Activated T-helper 1 cell treated with anti-CD3 and anti-CD28 coated beads, Interleukin-12 subunit alpha, Interleukin-12 subunit beta, Interleukin-2, Interleukin-4 antibody, amounts not matched to agents 30 ng/mL and 10 ng/mL and 1 ng/mL, durations not matched to agents 14 hours and 24 hours and 36 hours (primary cell): ENCODE measurements at regions of chr7 and their contacts with region 1.

Region 1: GRCh38 chr7:44847508-44847920 is 373 bp downstream of the H2AZ2 start:
- DNase-seq: peak; percentile 81
- H3K4me3 Mint-ChIP-seq: peak overlapping the region; percentile 90
- H3K27ac Mint-ChIP-seq: peak overlapping the region; percentile 98
- H3K4me1 Mint-ChIP-seq: peaks cover 54% of the 10 kb centered on the region
- H3K27me3 Mint-ChIP-seq: no peaks in the 10 kb centered on the region

Region 2: GRCh38 chr7:44490351-44491200 is 356.9 kb before region 1 on chr7 and contains the start of gene NUDCD3:
- intact Hi-C with region 1: loop called (anchors 5 kb)
- DNase-seq: peak; percentile 73
- H3K4me3 Mint-ChIP-seq: peak within 1 kb of the TSS; percentile 88
- H3K27ac Mint-ChIP-seq: peak within 1 kb of the TSS; percentile 93
- H3K4me1 Mint-ChIP-seq: peaks cover 44% of the 10 kb centered on the region
- H3K27me3 Mint-ChIP-seq: no peaks in the 10 kb centered on the region
- total RNA-seq, gene NUDCD3: 77.9 and 83.1 TPM in 2 replicates

Region 3: DNA sequence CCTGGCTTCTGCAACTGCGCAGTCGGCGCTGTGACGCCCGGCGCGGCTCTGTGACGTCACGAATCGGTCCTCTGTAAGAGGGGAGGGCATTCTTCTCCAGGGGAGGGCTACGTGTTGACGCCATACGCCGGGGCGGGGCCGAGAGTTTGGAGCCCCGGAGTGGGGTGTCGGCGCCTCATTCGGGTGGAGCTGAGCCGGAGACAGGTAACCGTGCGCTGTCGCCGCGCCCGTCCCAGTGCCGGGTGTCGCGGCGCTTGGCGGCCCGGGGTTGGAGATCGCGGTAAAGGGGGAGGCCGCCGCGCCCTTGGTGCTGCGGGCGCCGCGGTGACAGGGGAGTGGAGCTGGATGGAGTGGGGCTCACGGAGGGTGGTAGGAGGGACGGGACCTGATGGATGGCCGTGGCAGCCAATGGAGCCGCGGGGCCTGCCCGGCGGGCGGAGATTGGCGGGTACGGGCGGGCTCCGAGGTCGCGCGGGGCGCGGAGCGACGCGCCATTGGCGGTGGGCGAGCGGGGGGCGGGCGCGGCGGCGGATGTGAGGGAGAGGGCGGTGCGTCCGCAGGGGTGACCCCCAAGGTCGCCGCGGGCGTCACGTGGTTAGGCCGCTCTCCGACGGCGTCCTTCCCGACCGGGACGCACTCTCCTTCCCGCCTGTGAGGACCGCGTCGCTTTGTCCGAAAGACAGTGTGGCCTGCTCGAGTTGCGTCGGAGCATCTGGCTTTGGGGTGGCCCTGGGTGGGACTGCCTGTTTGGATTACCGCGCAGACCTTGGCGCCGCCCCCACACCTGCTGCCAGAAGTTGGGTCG is 240.9 kb before region 1 on chr7 and contains the start of gene OGDH:
- intact Hi-C with region 1: loop called (anchors 1 kb)
- DNase-seq: peak; percentile 98
- H3K4me3 Mint-ChIP-seq: peak within 1 kb of the TSS; percentile 98
- H3K27ac Mint-ChIP-seq: peak within 1 kb of the TSS; percentile 99
- H3K4me1 Mint-ChIP-seq: peaks cover 39% of the 10 kb centered on the region
- H3K27me3 Mint-ChIP-seq: peaks cover 10% of the 10 kb centered on the region
- total RNA-seq, gene OGDH: 101 and 105 TPM in 2 replicates

Region 4: DNA sequence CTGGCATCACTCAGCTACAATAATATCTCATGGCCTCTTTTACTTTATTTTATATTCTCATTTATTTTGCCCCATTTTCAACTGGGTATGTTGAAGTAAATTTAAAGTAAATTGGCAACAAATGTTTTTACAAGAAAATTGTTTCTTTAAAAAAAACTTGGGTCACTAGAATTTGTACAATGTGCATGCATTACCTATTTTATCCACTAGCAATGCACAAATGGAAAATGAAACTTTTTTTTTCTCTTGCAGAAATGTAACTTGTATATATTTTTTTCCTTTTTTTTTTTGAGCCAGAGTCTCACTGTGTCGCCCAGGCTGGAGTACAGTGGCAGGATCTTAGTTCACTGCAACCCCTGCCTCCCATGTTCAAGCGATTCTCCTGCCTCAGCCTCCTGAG is 10.6 kb after region 1 on chr7:
- intact Hi-C with region 1: loop called (anchors 1 kb)
- DNase-seq: no peak
- H3K4me3 Mint-ChIP-seq: no peak overlapping the region
- H3K27ac Mint-ChIP-seq: no peak overlapping the region
- H3K4me1 Mint-ChIP-seq: peaks cover 17% of the 10 kb centered on the region
- H3K27me3 Mint-ChIP-seq: peaks cover 2% of the 10 kb centered on the region

Region 5: DNA sequence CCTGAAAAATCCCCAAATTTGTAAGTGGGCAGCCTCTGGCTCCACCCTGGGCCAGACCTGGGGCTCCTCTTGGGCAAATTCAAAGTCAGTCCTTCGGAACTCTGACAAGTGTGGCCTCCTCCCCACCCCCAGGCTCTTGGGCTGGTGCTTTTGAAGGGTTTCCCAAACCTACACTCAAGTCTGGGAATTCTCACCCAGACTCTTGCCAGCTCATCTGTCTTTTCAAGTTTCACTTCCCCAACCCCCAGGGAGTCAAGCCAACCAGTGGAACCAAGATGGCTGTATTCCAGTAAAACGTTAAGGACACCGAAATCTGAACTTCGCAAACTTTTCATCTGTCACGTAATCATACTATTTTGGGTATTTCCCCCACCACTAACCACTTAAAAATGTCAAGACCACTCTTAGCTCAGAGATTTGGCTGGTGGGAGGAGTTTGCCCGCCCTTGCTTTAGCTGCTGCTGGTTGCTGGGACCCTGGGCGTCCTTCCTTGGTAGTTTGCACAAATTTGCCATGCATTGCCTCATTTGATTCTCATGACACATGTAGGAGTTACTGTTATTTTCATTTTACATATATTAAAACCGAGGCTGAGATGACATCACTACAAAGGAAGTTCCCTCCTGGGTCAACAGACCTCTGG is 133.0 kb after region 1 on chr7:
- intact Hi-C with region 1: loop called (anchors 1 kb)
- DNase-seq: peak; percentile 56
- H3K4me3 Mint-ChIP-seq: peak overlapping the region; percentile 98
- H3K27ac Mint-ChIP-seq: peak overlapping the region; percentile 98
- H3K4me1 Mint-ChIP-seq: peaks cover 78% of the 10 kb centered on the region
- H3K27me3 Mint-ChIP-seq: no peaks in the 10 kb centered on the region

Region 6: GRCh38 chr7:45196374-45196773 is 348.9 kb after region 1 on chr7:
- intact Hi-C with region 1: loop called (anchors 5 kb)
- DNase-seq: peak; percentile 14
- H3K4me3 Mint-ChIP-seq: no peak overlapping the region
- H3K27ac Mint-ChIP-seq: peak overlapping the region; percentile 83
- H3K4me1 Mint-ChIP-seq: peaks cover 67% of the 10 kb centered on the region
- H3K27me3 Mint-ChIP-seq: peaks cover 4% of the 10 kb centered on the region